GM13977 (cell line): ENCODE measurements at regions of chr7 and their contacts with region 1.

Region 1: GRCh38 chr7:39465055-39465929 is 100.9 kb upstream of the YAE1 start:
- DNase-seq: peak; percentile 65
- CTCF ChIP-seq: peak; percentile 77

Region 2: GRCh38 chr7:38681882-38682281 is 783.4 kb before region 1 on chr7:
- in situ Hi-C with region 1: no loop called
- DNase-seq: no peak
- CTCF ChIP-seq: no peak

Region 3: DNA sequence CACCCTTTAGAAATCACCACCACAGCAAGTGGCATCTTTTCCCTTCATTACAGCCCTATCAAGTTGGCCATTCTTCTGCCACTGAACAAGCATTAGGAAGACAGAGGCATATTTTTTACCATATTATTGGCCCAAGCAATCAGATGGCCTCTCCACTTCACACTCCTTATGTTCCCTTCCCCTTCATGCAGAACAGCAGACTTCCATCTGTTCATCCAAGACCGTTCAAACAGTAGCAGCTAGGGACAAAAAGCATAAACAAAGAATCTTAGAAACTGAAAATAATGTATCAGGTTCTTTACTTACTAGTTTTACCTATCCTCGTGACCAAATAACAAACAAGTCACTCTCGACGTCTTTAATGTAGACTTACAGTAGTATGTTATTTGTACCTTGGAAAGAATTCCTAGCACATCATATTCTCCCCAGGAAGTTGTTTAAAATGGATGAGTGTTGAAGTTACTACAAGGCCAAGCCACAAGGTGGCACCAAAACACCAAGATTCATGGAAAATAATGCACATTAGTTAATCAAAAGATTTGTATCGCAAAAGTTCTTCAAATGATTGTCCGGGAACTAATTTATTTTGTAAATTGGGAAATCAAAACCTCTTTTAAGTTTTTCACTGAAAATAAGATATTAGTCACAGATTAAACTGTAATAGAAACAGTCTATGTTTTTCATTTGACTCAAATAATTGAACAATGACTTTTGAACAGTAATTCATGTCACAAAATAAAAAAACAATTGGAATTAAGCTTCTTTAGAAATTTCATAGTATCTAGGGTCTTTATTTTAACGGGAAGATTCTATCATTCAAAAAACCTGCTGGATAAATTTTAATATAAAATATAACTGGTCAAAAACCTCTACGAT is 668.4 kb before region 1 on chr7:
- in situ Hi-C with region 1: loop called (anchors 25 kb)
- DNase-seq: peak; percentile 12
- CTCF ChIP-seq: peak; percentile 73